ENCODE measurements at regions of chr16 and their contacts with region 1.

Region 1: GRCh38 chr16:318628-319027 is 33.9 kb downstream of the AXIN1 start:
- DNase-seq: peak; percentile 39 to 79
- H3K4me3 ChIP-seq: no peak overlapping the region
- H3K27ac ChIP-seq: no peak overlapping the region
- H3K4me1 ChIP-seq: peaks cover 0 to 11% (median 8%) of the 10 kb centered on the region in 4 experiments; a peak in 6 of 7 replicates
- H3K27me3 ChIP-seq: no peaks in the 10 kb centered on the region
- CTCF ChIP-seq: peak; percentile 87 to 93 (median 89)
- EP300 ChIP-seq: no peak
- POLR2A ChIP-seq: no peak
- RAD21 ChIP-seq: peak; percentile 64 to 74

Region 2: DNA sequence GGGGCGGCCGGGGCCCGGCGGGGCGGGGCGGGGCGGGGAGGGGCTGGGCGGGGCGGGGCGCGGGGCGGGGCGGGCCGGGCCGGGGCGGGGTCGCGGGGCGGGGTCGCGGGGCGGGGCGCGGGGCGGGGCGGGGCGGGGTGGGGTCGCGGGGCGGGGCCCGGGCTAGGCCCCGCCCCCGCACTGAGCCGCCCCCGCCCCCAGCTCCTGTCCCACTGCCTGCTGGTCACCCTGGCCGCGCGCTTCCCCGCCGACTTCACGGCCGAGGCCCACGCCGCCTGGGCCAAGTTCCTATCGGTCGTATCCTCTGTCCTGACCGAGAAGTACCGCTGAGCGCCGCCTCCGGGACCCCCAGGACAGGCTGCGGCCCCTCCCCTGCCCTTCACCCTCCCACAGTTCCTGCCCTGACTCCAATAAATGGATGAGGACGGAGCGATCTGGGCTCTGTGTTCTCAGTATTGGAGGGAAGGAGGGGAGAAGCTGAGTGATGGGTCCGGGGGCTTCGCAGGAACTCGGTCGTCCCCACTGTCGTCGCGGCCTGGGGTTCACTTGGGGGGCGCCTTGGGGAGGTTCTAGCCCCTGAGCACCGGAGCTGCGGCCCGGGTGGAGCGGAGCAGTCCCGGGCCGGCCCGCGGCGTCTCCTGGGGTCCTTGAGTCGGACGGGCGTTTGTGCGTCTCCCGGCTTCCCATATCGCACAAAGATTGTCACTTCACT is 153.6 kb before region 1 on chr16:
- CTCF ChIA-PET with region 1: no interaction called
- POLR2A ChIA-PET with region 1: no interaction called
- DNase-seq: peak in 1 of 2 experiments; percentile 82
- H3K4me3 ChIP-seq: peak overlapping the region; percentile 14 to 59 (median 20); a peak in 7 of 8 replicates
- H3K27ac ChIP-seq: no peak overlapping the region
- H3K4me1 ChIP-seq: peaks cover 0 to 18% (median 16%) of the 10 kb centered on the region in 4 experiments; a peak in 6 of 7 replicates
- H3K27me3 ChIP-seq: peaks cover 33 to 58% (median 54%) of the 10 kb centered on the region in 4 experiments
- CTCF ChIP-seq: no peak
- EP300 ChIP-seq: no peak
- POLR2A ChIP-seq: no peak
- RAD21 ChIP-seq: no peak

Region 3: DNA sequence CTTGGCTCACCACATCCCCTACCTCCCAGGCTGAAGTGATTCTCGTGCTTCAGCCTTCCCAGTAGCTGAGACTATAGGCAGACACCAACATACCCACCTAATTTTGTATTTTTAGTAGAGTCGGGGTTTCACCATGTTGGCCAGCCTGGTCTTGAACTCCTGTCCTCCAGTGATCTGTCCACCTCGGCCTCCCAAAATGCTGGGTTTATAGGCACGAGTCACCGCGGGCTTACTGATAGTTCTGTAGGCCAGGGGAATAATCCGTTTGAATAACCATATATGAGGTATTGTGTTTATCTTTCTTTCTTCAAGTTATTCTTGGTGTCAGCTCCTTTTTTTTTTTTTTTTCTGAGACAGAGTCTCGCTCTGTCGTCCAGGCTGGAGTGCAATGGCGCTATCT is 76.3 kb before region 1 on chr16:
- CTCF ChIA-PET with region 1: interaction called, 13 read pairs
- POLR2A ChIA-PET with region 1: no interaction called
- DNase-seq: no peak
- H3K4me3 ChIP-seq: no peak overlapping the region
- H3K27ac ChIP-seq: no peak overlapping the region
- H3K4me1 ChIP-seq: no peaks in the 10 kb centered on the region
- H3K27me3 ChIP-seq: no peaks in the 10 kb centered on the region
- CTCF ChIP-seq: no peak
- EP300 ChIP-seq: no peak
- POLR2A ChIP-seq: no peak
- RAD21 ChIP-seq: no peak

Region 4: GRCh38 chr16:337975-338575 is 19.4 kb after region 1 on chr16:
- CTCF ChIA-PET with region 1: interaction called, 22 read pairs
- POLR2A ChIA-PET with region 1: interaction called, 3 read pairs
- DNase-seq: no peak
- H3K4me3 ChIP-seq: no peak overlapping the region
- H3K27ac ChIP-seq: no peak overlapping the region
- H3K4me1 ChIP-seq: peaks cover 0 to 2% (median 0%) of the 10 kb centered on the region in 4 experiments; a peak in 1 of 7 replicates
- H3K27me3 ChIP-seq: no peaks in the 10 kb centered on the region
- CTCF ChIP-seq: no peak
- EP300 ChIP-seq: no peak
- POLR2A ChIP-seq: no peak
- RAD21 ChIP-seq: no peak

Region 5: DNA sequence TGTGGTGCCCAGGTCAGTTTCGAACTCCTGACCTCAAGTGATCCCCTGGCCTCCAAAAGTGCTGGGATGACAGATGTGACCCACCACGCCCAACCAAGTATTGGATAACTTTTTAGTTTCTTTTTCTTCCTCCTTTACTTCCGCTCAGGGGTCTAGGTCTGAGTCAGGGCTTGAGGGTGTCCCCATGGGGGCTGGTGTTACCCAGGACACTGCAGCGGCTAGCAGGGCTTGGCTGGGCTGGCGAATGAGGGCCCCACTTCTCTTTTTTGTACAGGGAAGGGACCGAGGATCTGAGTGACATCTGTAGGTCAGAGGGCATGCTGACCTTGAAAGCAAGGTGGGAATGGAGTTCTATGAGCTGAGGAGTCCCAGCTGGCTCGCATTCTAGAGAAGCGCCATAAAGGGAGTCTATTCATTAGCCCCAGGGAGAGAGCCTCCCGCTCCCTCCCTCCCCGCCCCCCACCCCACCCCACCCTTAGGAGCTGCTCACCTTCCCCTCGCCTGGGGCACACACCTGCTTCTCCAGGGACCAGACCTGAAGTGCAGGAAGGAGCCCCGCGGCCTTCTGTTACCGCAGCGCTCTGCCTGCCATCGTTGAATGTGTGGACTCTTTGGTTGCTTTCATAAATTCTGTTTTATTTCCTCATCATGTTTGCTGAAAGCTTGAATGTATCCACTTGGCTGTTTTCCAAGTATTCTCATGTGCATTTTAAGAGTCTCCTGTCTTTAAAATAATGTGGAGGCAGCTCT is 131.9 kb after region 1 on chr16:
- CTCF ChIA-PET with region 1: no interaction called
- POLR2A ChIA-PET with region 1: no interaction called
- DNase-seq: no peak
- H3K4me3 ChIP-seq: no peak overlapping the region
- H3K27ac ChIP-seq: no peak overlapping the region
- H3K4me1 ChIP-seq: no peaks in the 10 kb centered on the region; a peak in 1 of 7 replicates
- H3K27me3 ChIP-seq: no peaks in the 10 kb centered on the region
- CTCF ChIP-seq: no peak
- EP300 ChIP-seq: no peak
- POLR2A ChIP-seq: no peak
- RAD21 ChIP-seq: no peak

Region 6: DNA sequence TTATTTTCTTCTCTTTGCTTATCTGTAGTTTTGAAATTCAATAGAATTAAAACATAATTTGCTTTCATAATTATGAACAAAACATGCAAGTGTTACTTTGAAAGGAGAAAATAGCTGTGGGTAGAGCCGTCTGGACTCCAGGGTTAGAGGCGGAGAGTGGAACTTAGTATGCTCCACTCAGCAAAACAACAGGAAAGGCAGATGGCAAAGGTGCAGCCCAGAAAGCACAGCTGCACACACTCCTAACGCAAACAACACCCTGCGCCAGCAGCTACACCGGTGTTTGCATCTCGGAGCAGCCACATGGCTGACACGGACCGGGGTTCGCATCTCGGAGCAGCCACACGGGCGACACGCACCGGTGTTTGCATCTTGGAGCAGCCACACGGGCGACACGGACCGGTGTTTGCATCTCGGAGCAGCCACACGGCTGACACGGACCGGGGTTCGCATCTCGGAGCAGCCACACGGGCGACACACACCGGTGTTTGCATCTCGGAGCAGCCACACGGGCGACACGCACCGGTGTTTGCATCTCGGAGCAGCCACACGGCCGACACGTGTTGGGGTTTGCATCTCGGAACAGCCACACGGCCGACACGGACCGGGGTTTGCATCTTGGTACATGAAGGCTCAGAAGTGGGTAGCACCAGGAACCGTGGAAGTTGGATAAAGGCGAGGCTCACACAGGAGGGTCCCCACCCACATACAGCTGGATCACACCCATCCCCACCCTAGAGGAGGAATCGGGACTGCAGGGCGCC is 196.7 kb after region 1 on chr16:
- CTCF ChIA-PET with region 1: no interaction called
- POLR2A ChIA-PET with region 1: no interaction called
- DNase-seq: no peak
- H3K4me3 ChIP-seq: no peak overlapping the region
- H3K27ac ChIP-seq: no peak overlapping the region; the same call in 1 of the 2 replicates
- H3K4me1 ChIP-seq: no peaks in the 10 kb centered on the region
- H3K27me3 ChIP-seq: no peaks in the 10 kb centered on the region
- CTCF ChIP-seq: no peak
- EP300 ChIP-seq: no peak
- POLR2A ChIP-seq: no peak
- RAD21 ChIP-seq: no peak